ENCODE measurements at regions of chr20 and their contacts with region 1.

Region 1: GRCh38 chr20:62616728-62617621 is 25.3 kb upstream of the SLCO4A1 start:
- DNase-seq: peak; percentile 75
- H3K4me3 ChIP-seq: no peak overlapping the region
- H3K27ac ChIP-seq: no peak overlapping the region
- H3K4me1 ChIP-seq: peaks cover 20% of the 10 kb centered on the region
- H3K27me3 ChIP-seq: no peaks in the 10 kb centered on the region
- CTCF ChIP-seq: peak; percentile 96 to 99
- POLR2A ChIP-seq: no peak

Region 2: DNA sequence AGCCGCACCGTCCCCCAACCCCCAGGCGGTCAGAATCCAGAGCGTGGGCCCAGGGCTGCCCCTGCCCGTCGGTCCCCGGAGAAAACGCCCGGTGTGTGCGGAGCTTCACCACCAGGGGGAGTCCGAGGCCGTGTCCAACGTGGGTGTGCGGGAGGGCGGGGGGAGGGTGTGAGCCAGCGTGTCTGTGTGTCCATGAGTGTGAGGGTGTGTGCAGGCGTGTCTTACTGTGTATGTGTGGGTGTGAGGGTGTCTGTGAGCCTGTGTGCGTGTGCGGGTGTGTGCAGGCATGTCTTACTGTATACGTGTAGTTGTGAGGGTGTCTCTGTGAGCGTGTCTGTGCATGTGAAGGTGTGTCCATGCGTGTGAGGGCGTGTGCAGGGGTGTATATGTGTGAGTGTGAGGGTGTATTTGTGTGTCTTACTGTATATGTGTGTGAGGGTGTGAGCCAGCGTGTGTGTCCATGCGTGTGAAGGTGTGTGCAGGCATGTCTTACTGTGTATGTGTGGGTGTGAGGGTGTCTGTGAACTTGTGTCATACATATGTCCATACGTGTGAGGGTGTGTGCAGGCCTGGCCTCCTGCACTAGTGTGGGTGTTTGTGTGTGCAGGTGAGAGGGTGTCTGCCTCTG is 116.6 kb before region 1 on chr20:
- CTCF ChIA-PET with region 1: interaction called, 107 read pairs
- POLR2A ChIA-PET with region 1: no interaction called
- dilution Hi-C with region 1: no loop called
- intact Hi-C with region 1: loop called (anchors 1 kb)
- DNase-seq: peak; percentile 42
- H3K4me3 ChIP-seq: no peak overlapping the region
- H3K27ac ChIP-seq: no peak overlapping the region
- H3K4me1 ChIP-seq: no peaks in the 10 kb centered on the region
- H3K27me3 ChIP-seq: no peaks in the 10 kb centered on the region
- CTCF ChIP-seq: peak; percentile 77 to 96
- POLR2A ChIP-seq: no peak

Region 3: GRCh38 chr20:62576815-62577506 is 40.0 kb before region 1 on chr20:
- CTCF ChIA-PET with region 1: interaction called, 25 read pairs
- POLR2A ChIA-PET with region 1: no interaction called
- dilution Hi-C with region 1: no loop called
- intact Hi-C with region 1: no loop called
- DNase-seq: peak; percentile 28
- H3K4me3 ChIP-seq: no peak overlapping the region
- H3K27ac ChIP-seq: no peak overlapping the region
- H3K4me1 ChIP-seq: no peaks in the 10 kb centered on the region
- H3K27me3 ChIP-seq: peaks cover 0 to 5% of the 10 kb centered on the region in 2 experiments
- CTCF ChIP-seq: no peak
- POLR2A ChIP-seq: no peak

Region 4: GRCh38 chr20:62590301-62591121 is 26.5 kb before region 1 on chr20:
- CTCF ChIA-PET with region 1: interaction called, 19 read pairs
- POLR2A ChIA-PET with region 1: no interaction called
- dilution Hi-C with region 1: no loop called
- intact Hi-C with region 1: no loop called
- DNase-seq: peak; percentile 71
- H3K4me3 ChIP-seq: no peak overlapping the region
- H3K27ac ChIP-seq: no peak overlapping the region
- H3K4me1 ChIP-seq: peaks cover 17% of the 10 kb centered on the region
- H3K27me3 ChIP-seq: no peaks in the 10 kb centered on the region
- CTCF ChIP-seq: no peak
- POLR2A ChIP-seq: no peak